K562 (cell line): ENCODE measurements at regions of chr5 and their contacts with region 1.

Region 1: DNA sequence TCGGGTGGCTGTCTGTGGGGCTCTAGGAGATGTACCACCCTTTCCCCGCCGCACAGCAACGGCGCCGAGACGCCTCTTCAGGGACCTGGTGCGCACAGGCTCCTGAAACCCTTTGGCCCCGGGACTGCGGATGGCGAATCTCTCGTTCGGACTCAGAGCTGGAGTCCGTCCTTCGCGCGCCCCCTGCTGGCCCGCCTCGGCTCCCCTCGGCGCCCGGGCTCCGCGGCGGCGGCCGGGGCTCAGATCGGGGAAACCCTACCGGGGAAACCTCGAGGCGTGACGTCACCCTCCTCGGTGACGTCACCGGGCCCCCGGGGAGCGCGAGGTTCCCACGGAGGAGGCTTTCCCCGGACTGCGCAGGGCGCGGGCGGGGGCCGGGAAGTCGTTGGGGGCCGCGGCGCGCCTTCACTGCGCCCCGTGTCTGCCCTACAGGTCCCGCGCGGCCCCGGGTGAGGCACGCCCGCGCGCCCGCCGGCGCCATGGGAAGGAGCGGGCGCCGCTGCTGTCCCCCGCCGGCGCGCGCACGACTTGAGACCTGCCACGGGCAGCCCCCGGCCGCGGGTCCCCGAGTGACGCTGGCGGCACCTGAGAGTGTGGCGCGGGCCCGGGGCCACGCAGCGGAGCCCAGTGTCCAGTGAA is 7.9 kb downstream of the PRR7 start:
- DNase-seq: peak; percentile 92 to 98 (median 94)
- ATAC-seq: peak; percentile 71
- H3K4me3 ChIP-seq: peak overlapping the region; percentile 88
- H3K27ac ChIP-seq: peak overlapping the region; percentile 91
- H3K4me1 ChIP-seq: peaks cover 0 to 58% of the 10 kb centered on the region in 2 experiments; a peak in 3 of 5 replicates
- H3K27me3 ChIP-seq: no peaks in the 10 kb centered on the region
- CTCF ChIP-seq: peak; percentile 90 to 98 (median 96)
- EP300 ChIP-seq: no peak
- POLR2A ChIP-seq: no peak
- RAD21 ChIP-seq: peak; percentile 95

Region 2: DNA sequence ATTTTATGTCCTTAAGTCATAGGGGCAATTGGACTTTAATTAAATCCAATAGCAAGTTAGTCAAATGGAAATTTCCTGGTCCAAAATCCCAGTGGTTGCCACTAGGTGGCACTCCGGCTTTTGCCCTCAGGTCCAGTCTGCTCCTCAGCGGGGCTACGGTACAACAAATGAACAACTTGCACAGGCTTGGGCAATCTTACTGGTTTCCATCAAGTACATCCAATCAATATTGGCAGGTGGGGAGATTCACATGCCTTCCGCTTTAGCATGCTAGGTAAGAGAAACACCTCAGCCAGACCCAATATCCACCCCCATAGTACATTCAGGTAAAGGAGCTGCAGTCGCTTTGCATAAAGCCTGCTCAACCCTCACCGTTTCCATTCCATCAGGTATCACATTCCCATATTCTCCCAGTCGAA is 136.5 kb before region 1 on chr5:
- CTCF ChIA-PET with region 1: interaction called, 12 read pairs
- POLR2A ChIA-PET with region 1: interaction called, 6 read pairs
- in situ Hi-C with region 1: no loop called
- intact Hi-C with region 1: loop called (anchors 2 kb)
- DNase-seq: peak; percentile 60 to 85 (median 70)
- ATAC-seq: peak; percentile 78
- H3K4me3 ChIP-seq: no peak overlapping the region
- H3K27ac ChIP-seq: no peak overlapping the region
- H3K4me1 ChIP-seq: peaks cover 4 to 33% of the 10 kb centered on the region in 2 experiments
- H3K27me3 ChIP-seq: no peaks in the 10 kb centered on the region
- CTCF ChIP-seq: peak; percentile 87 to 98 (median 94)
- EP300 ChIP-seq: no peak
- POLR2A ChIP-seq: no peak
- RAD21 ChIP-seq: peak; percentile 70 to 87

Region 3: DNA sequence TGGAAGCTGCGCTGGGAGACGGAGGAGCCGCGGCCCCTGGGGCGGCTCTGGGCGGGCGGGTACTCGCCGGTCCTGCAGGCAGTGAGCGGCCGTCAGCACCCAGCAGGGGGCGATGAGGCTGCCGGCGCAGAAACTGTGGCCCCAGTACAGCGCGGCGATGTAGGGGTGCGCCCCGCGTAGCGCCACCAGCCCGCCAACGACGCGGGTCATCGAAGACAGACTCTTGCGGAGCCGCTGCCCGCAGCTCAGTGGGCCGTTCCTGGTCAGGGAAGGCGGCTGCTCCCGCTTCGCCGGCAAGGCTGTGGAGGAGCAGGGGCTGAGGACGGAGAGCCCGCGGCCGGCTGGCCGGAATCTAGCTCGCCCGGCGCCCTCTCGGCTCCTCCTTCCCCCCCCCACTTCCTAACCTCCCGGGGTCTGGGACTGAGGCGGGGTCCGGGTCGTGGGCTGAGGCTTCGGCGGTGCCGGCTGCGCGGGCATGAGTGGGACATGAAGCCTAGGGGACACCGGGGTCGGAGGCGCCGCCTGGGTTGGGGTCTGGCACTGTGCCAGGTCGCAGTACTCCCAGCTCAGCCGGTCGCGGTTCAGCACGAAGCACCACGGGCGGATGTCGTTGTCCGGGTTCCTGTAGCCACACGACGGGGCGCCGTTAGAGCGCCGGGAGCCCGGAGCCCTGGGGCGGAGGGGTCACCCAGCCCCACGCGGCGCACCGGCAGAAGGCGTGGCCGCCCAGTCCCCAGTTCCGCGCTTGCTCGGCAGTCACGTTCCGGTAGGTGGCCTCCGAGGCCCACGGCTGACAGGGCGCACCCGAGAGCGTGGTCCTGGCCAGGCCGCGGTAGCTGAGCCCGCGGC is 50.5 kb before region 1 on chr5:
- CTCF ChIA-PET with region 1: interaction called, 107 read pairs
- POLR2A ChIA-PET with region 1: interaction called, 19 read pairs
- in situ Hi-C with region 1: no loop called
- intact Hi-C with region 1: loop called (anchors 1 kb)
- DNase-seq: peak; percentile 94 to 95 (median 94)
- ATAC-seq: peak; percentile 96
- H3K4me3 ChIP-seq: peak overlapping the region; percentile 62
- H3K27ac ChIP-seq: peak overlapping the region; percentile 86
- H3K4me1 ChIP-seq: peaks cover 10 to 48% of the 10 kb centered on the region in 2 experiments
- H3K27me3 ChIP-seq: no peaks in the 10 kb centered on the region
- CTCF ChIP-seq: peak; percentile 81 to 96 (median 94)
- EP300 ChIP-seq: no peak; the same call in 1 of the 2 replicates
- POLR2A ChIP-seq: peak; percentile 77
- RAD21 ChIP-seq: peak; percentile 94 to 95

Region 4: GRCh38 chr5:177440211-177440971 is 14.1 kb before region 1 on chr5:
- CTCF ChIA-PET with region 1: no interaction called
- POLR2A ChIA-PET with region 1: interaction called, 13 read pairs
- in situ Hi-C with region 1: no loop called
- intact Hi-C with region 1: no loop called
- DNase-seq: no peak
- ATAC-seq: no peak
- H3K4me3 ChIP-seq: no peak overlapping the region
- H3K27ac ChIP-seq: no peak overlapping the region
- H3K4me1 ChIP-seq: peaks cover 9 to 41% of the 10 kb centered on the region in 2 experiments; a peak in 4 of 5 replicates
- H3K27me3 ChIP-seq: no peaks in the 10 kb centered on the region
- CTCF ChIP-seq: no peak
- EP300 ChIP-seq: no peak
- POLR2A ChIP-seq: peak; percentile 26; the same call in 1 of the 2 replicates
- RAD21 ChIP-seq: no peak